OCI-LY7 (cell line): ENCODE measurements at regions of chr4 and their contacts with region 1.

Region 1: GRCh38 chr4:144787365-144788258 is 141.7 kb downstream of the HHIP start:
- DNase-seq: peak; percentile 46
- H3K4me3 ChIP-seq: no peak overlapping the region
- H3K27ac ChIP-seq: no peak overlapping the region
- H3K4me1 ChIP-seq: no peaks in the 10 kb centered on the region
- CTCF ChIP-seq: peak; percentile 81

Region 2: GRCh38 chr4:144174401-144175067 is 613.1 kb before region 1 on chr4:
- CTCF ChIA-PET with region 1: no interaction called
- POLR2A ChIA-PET with region 1: no interaction called
- intact Hi-C with region 1: loop called (anchors 1 kb)
- DNase-seq: peak; percentile 54
- H3K4me3 ChIP-seq: no peak overlapping the region
- H3K27ac ChIP-seq: no peak overlapping the region
- H3K4me1 ChIP-seq: no peaks in the 10 kb centered on the region
- CTCF ChIP-seq: peak; percentile 81

Region 3: GRCh38 chr4:144611846-144612245 is 175.8 kb before region 1 on chr4:
- CTCF ChIA-PET with region 1: no interaction called
- POLR2A ChIA-PET with region 1: no interaction called
- intact Hi-C with region 1: loop called (anchors 10 kb)
- DNase-seq: peak; percentile 12
- H3K4me3 ChIP-seq: no peak overlapping the region
- H3K27ac ChIP-seq: no peak overlapping the region
- H3K4me1 ChIP-seq: no peaks in the 10 kb centered on the region
- CTCF ChIP-seq: peak; percentile 67

Region 4: DNA sequence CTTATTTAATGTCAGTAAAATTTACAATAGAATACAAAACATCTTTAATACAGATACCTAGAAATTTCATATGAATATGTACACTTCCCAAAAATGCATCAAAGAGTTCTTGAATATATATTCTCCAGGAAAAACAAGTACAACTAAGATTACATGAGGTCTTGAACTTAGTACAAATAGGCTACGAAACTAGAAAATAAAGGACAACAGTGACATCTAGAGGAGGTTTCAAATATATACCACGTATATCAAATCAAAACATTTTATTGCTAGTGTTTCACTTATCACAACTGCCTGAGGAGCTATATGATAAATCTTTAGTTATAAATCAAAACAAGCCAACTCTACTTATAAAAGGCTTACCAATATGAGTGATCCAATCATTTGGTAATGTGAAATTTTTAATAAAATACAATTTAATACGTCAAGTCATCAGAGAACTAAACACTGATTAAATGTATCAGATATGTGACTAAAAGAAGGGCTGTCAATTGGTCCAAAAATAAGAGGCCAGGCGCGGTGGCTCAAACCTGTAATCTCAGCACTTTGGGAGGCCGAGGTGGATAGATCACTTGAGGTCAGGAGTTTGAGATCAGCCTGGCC is 273.8 kb after region 1 on chr4:
- CTCF ChIA-PET with region 1: no interaction called
- POLR2A ChIA-PET with region 1: no interaction called
- intact Hi-C with region 1: loop called (anchors 10 kb)
- DNase-seq: peak; percentile 60
- H3K4me3 ChIP-seq: no peak overlapping the region
- H3K27ac ChIP-seq: no peak overlapping the region
- H3K4me1 ChIP-seq: no peaks in the 10 kb centered on the region
- CTCF ChIP-seq: peak; percentile 86